ENCODE measurements at regions of chr9 and their contacts with region 1.

Region 1: GRCh38 chr9:114505187-114506081 is at the start of gene WHRN:
- DNase-seq: peak; percentile 83
- H3K4me3 ChIP-seq: peak within 1 kb of the TSS; percentile 11 to 47 (median 39)
- H3K27ac ChIP-seq: no peak within 1 kb of the TSS
- H3K4me1 ChIP-seq: peaks cover 6% of the 10 kb centered on the region
- H3K27me3 ChIP-seq: peaks cover 57 to 82% of the 10 kb centered on the region in 2 experiments
- CTCF ChIP-seq: no peak
- POLR2A ChIP-seq: no peak
- total RNA-seq, gene WHRN: 0.69 and 1.1 TPM in 2 replicates

Region 2: DNA sequence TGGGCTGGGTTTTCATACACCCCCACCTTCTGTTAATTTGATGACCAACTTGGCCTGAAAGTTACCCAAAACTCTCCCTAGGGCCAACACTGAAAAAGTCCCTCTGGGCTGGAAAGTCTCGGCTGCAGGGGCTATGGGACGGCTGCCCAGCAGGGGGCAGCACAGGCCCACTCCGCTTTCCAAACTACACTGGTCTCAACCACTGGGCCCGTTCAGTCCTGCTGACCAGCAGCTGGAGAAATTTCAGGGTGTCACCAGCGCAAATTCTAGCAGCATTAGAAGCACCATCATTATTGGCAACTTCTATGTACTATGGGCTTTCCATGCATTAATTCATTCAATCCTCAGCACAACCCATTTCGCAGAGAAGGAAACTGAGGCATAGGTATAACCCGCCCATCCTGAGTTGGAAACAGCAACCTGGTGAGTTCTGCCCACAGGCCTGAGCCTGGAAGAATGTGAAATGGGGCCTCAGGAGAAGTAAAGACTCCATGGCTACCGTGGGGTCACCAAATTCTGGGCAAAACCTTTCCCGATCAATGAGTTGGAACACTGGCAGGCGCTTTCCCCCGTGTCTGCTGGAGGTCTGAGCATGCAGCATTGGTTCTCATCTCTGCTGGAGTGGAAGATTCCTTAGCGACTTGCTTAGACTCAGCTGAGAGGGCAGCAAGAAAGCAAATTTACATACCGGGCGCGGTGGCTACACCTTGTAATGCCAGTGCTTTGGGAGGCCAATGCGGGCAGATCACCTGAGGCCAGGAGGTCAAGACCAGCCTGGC is 166.1 kb before region 1 on chr9:
- CTCF ChIA-PET with region 1: no interaction called
- POLR2A ChIA-PET with region 1: no interaction called
- dilution Hi-C with region 1: no loop called
- intact Hi-C with region 1: loop called (anchors 10 kb)
- DNase-seq: peak; percentile 29
- H3K4me3 ChIP-seq: no peak overlapping the region
- H3K27ac ChIP-seq: no peak overlapping the region
- H3K4me1 ChIP-seq: no peaks in the 10 kb centered on the region
- H3K27me3 ChIP-seq: no peaks in the 10 kb centered on the region
- CTCF ChIP-seq: peak; percentile 88 to 89
- POLR2A ChIP-seq: no peak

Region 3: DNA sequence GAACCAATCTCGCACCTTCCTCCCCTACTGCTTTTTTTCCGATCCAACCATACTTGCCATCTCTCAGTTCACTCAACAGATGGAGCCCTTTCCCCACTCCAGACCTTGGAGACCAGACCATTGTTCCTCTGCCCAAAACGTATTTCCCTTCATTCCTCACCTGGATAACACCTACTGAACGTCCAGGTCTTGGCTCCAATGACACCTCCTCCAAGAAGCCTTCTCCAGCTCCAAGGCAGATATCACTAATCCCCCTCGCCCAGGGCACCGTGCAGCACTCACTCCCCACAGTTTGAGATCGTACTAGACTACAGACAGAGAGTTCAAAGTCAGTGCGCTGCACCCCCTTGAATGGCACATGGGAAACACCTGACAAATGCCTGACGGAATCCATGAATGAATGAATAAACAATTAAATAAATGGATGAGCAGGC is 70.5 kb before region 1 on chr9:
- CTCF ChIA-PET with region 1: interaction called, 5 read pairs
- POLR2A ChIA-PET with region 1: no interaction called
- dilution Hi-C with region 1: no loop called
- intact Hi-C with region 1: loop called (anchors 5 kb)
- DNase-seq: peak; percentile 23
- H3K4me3 ChIP-seq: no peak overlapping the region
- H3K27ac ChIP-seq: no peak overlapping the region
- H3K4me1 ChIP-seq: no peaks in the 10 kb centered on the region
- H3K27me3 ChIP-seq: peaks cover 3 to 4% of the 10 kb centered on the region in 2 experiments
- CTCF ChIP-seq: peak; percentile 46 to 60
- POLR2A ChIP-seq: no peak

Region 4: GRCh38 chr9:114487607-114488300 is 17.7 kb before region 1 on chr9:
- CTCF ChIA-PET with region 1: interaction called, 7 read pairs
- POLR2A ChIA-PET with region 1: no interaction called
- dilution Hi-C with region 1: no loop called
- intact Hi-C with region 1: loop called (anchors 1 kb)
- DNase-seq: peak; percentile 70
- H3K4me3 ChIP-seq: no peak overlapping the region
- H3K27ac ChIP-seq: no peak overlapping the region
- H3K4me1 ChIP-seq: no peaks in the 10 kb centered on the region
- H3K27me3 ChIP-seq: peaks cover 2% of the 10 kb centered on the region in 2 experiments
- CTCF ChIP-seq: peak; percentile 80 to 90
- POLR2A ChIP-seq: no peak

Region 5: GRCh38 chr9:114551883-114552685 is 46.6 kb after region 1 on chr9:
- CTCF ChIA-PET with region 1: interaction called, 3 read pairs
- POLR2A ChIA-PET with region 1: no interaction called
- dilution Hi-C with region 1: no loop called
- intact Hi-C with region 1: loop called (anchors 1 kb)
- DNase-seq: peak; percentile 86
- H3K4me3 ChIP-seq: no peak overlapping the region
- H3K27ac ChIP-seq: peak overlapping the region; percentile 23
- H3K4me1 ChIP-seq: peaks cover 4% of the 10 kb centered on the region
- H3K27me3 ChIP-seq: no peaks in the 10 kb centered on the region
- CTCF ChIP-seq: no peak
- POLR2A ChIP-seq: no peak

Region 6: GRCh38 chr9:114574438-114574837 is 69.0 kb after region 1 on chr9:
- CTCF ChIA-PET with region 1: no interaction called
- POLR2A ChIA-PET with region 1: no interaction called
- dilution Hi-C with region 1: no loop called
- intact Hi-C with region 1: no loop called
- DNase-seq: no peak
- H3K4me3 ChIP-seq: no peak overlapping the region
- H3K27ac ChIP-seq: no peak overlapping the region
- H3K4me1 ChIP-seq: no peaks in the 10 kb centered on the region
- H3K27me3 ChIP-seq: no peaks in the 10 kb centered on the region
- CTCF ChIP-seq: no peak
- POLR2A ChIP-seq: no peak

Region 7: DNA sequence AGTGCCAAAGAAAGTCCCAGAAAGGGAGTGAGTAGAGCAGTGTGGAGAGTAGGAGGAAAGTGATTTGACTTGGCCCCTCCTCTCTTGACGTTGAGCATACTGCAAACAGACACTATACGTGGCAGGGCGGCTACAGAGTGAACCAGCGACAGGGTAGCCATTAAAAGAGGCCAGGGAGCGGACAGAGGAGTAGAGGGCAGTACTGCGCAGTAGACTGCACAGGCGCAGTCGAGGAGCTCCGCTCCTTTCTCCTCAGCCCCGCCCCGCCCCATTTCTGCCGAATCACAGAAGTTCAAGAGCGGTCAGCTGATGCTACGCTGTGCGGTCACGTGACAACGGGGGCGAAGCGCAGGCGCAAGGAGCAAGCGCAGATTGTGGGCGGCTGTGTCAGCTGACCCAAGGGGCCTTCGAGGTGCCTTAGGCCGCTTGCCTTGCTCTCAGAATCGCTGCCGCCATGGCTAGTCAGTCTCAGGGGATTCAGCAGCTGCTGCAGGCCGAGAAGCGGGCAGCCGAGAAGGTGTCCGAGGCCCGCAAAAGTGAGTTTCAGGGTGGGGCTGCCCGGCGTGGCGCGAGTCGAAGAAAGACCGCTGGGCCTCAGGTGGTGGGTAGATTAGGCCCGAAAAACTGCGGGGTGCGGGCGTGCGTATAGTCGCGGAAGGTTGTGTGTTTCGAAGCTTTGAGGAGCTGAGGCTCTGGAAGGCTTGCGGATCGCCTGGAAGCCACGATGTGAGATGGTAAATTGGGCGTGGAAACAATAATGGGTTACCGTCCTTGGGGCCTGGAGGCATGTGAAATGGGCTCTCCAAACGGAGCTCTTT is 82.2 kb after region 1 on chr9 and contains the start of gene ATP6V1G1:
- CTCF ChIA-PET with region 1: interaction called, 8 read pairs
- POLR2A ChIA-PET with region 1: interaction called, 3 read pairs
- dilution Hi-C with region 1: no loop called
- intact Hi-C with region 1: loop called (anchors 1 kb)
- DNase-seq: peak; percentile 99
- H3K4me3 ChIP-seq: peak within 1 kb of the TSS; percentile 24 to 79 (median 73)
- H3K27ac ChIP-seq: peak within 1 kb of the TSS; percentile 66
- H3K4me1 ChIP-seq: peaks cover 23% of the 10 kb centered on the region
- H3K27me3 ChIP-seq: no peaks in the 10 kb centered on the region
- CTCF ChIP-seq: peak in 1 of 2 donors; percentile 11
- POLR2A ChIP-seq: peak; percentile 91
- total RNA-seq, gene ATP6V1G1: 78.9 and 82.0 TPM in 2 replicates

Region 8: DNA sequence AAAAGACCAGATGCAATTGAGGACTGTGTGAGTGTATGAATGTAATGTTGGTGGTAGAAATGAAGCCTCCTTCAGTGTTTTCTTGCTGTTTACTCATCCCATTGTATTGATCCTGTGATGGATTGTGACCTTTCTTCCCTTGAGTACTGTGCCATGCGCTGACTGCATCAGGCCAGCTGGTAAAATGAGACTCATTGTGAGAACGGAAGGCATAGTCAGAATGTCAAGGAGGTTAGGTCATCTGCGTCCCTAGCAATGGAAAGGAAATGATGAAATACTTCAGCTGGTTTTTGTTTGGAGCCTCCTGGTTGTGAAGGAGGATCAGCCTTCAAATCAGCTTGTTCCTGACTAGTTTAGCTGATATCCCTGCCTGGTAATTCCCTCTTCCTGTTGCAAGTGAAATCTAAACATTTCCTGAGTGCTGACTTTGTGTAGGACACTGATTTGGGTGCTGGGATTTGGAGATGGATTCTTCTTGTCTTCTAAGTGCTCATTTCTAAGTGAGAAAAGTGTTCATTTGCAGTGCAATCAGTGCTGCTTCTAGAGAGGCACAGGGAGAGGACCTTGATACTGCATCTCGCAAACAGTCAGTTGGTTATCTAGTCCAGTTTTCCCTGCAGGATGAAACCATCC is 389.5 kb after region 1 on chr9:
- CTCF ChIA-PET with region 1: no interaction called
- POLR2A ChIA-PET with region 1: no interaction called
- dilution Hi-C with region 1: no loop called
- intact Hi-C with region 1: loop called (anchors 5 kb)
- DNase-seq: peak; percentile 99
- H3K4me3 ChIP-seq: peak overlapping the region in 1 of 3 experiments; percentile 16
- H3K27ac ChIP-seq: peak overlapping the region; percentile 100
- H3K4me1 ChIP-seq: peaks cover 63% of the 10 kb centered on the region
- H3K27me3 ChIP-seq: no peaks in the 10 kb centered on the region
- CTCF ChIP-seq: no peak
- POLR2A ChIP-seq: peak; percentile 62

Measured in endothelial cell of umbilical vein (primary cell).